OCI-LY7 (cell line): ENCODE measurements at regions of chr11 and their contacts with region 1.

Region 1: GRCh38 chr11:57530596-57531507 is at the start of gene TIMM10:
- DNase-seq: peak; percentile 99
- H3K4me3 ChIP-seq: peak within 1 kb of the TSS; percentile 97
- H3K27ac ChIP-seq: peak within 1 kb of the TSS; percentile 74
- H3K4me1 ChIP-seq: peaks cover 31% of the 10 kb centered on the region
- CTCF ChIP-seq: peak; percentile 32
- total RNA-seq, gene TIMM10: 163 and 195 TPM in 2 replicates

Region 2: DNA sequence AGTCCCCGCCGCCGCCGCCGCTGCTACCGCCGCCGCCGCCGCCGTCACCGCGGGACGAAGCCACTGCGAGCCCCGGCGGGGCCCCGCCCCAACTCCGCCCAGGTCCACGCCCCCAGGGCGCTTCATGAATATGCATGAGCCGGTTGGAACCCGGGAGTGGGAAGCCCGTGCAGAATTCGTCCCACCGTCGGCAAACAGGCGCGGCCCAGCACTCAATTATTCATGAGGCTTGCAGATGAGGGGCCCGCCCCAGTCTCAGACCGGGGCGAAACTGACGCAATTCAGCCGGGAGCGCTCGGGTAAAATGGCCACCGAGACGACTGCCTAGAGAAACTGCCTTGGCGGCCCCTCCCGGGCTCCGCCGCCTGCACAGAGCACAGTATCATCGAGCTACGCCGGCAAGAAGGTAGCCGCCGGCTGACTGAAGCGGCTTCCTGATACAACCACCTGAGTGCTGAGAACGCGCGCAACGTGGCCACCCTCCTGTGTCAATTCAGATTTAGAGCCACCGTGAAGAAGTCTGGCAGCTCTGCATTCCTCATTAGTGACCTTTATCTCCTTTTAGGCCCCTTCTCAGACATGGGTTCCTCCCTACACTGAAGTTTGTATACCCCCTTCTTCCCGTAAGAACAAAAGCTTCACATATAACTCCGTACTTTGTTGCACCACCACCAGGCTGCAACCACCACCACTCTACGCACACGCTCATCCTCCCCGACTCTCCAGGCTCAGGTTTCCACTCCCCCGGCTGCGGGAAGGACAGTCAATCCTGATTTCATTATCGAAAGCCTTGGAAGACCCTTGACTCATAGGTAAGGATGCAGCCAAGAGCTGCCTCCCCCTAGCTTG is 205.7 kb before region 1 on chr11 and contains the start of gene TNKS1BP1:
- CTCF ChIA-PET with region 1: no interaction called
- POLR2A ChIA-PET with region 1: no interaction called
- intact Hi-C with region 1: loop called (anchors 1 kb)
- DNase-seq: peak; percentile 96
- H3K4me3 ChIP-seq: peak within 1 kb of the TSS; percentile 70
- H3K27ac ChIP-seq: peak within 1 kb of the TSS; percentile 86
- H3K4me1 ChIP-seq: peaks cover 28% of the 10 kb centered on the region
- CTCF ChIP-seq: no peak
- total RNA-seq, gene TNKS1BP1: 5.3 and 6.4 TPM in 2 replicates

Region 3: GRCh38 chr11:57446055-57446454 is 84.8 kb before region 1 on chr11:
- CTCF ChIA-PET with region 1: no interaction called
- POLR2A ChIA-PET with region 1: no interaction called
- intact Hi-C with region 1: no loop called
- DNase-seq: no peak
- H3K4me3 ChIP-seq: no peak overlapping the region
- H3K27ac ChIP-seq: no peak overlapping the region
- H3K4me1 ChIP-seq: no peaks in the 10 kb centered on the region
- CTCF ChIP-seq: no peak

Region 4: DNA sequence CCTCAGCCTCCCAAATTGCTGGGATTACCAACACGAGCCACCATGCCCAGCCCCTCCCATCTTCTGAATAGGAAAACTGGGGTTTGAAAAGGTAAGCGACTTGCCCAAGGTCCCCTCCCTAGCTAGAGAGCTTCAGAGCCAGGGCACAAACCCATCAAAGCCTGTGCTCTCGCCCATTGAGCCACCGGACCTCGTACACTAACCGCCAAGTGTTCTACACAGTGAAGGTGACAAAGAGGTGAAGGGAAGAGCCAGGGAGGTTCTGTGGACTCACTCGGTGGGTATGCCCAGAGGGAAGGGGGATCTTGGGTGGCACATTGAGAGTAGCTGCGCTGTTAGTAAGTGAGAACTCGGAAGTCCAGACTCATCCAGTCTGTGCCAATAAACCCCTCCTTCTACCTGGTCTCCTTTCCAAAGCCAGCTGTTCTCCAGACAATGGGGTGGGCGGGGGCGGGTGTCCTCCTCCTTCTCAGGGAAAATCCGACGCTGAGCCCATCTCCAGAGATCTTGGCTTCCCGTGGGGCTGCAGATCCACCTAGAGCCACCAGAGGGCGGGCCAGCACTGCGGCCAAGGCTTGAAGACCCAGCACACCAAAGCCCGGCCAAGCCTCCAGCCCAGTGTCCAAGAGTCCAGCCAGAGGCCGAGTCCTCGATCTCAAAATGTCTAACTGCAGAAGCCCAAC is 73.8 kb before region 1 on chr11:
- CTCF ChIA-PET with region 1: interaction called, 20 read pairs
- POLR2A ChIA-PET with region 1: interaction called, 4 read pairs
- intact Hi-C with region 1: loop called (anchors 1 kb)
- DNase-seq: peak; percentile 74
- H3K4me3 ChIP-seq: no peak overlapping the region
- H3K27ac ChIP-seq: no peak overlapping the region
- H3K4me1 ChIP-seq: peaks cover 27% of the 10 kb centered on the region
- CTCF ChIP-seq: peak; percentile 92

Region 5: DNA sequence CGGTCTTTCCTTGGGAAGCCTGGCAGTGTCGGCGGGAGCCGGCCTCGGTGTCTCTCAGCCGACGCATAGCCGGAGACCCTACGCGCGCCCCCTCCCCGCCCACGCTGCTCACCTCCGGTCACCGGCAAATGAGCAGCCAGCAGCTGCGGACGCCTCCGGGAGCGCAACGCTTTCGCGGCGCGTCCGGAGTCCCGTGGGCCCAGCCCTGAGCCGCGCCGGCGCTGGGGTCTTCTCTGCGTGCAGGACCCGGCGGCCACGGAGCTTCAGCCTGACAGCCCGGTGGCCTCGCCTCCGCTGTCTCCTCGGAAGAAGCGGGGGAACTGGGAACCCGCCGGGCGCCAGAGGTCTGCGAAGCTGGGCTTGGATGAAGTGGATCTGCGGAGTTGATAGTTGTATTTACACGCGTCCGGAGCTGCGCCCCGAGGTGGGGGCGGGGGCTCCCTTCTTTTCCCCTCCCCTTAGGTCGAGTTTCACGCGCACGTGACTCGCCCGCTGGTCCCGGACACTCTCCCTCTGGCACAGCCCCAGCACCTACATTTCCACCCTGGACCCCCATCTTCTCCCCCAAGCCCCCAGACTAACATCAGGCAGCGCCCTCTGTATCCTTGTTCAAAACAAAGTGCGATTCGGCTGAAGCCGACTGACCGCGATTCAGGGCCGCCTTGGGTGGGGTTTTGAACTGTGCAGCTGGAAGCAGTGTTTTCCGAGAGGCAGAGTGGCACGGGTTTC is 15.4 kb before region 1 on chr11 and contains the start of gene SLC43A1:
- CTCF ChIA-PET with region 1: interaction called, 21 read pairs
- POLR2A ChIA-PET with region 1: interaction called, 56 read pairs
- intact Hi-C with region 1: no loop called
- DNase-seq: peak; percentile 63
- H3K4me3 ChIP-seq: peak within 1 kb of the TSS; percentile 91
- H3K27ac ChIP-seq: peak within 1 kb of the TSS; percentile 65
- H3K4me1 ChIP-seq: peaks cover 43% of the 10 kb centered on the region
- CTCF ChIP-seq: 0 out of 2 replicates have a peak, but pooled peaks have one; percentile 31
- total RNA-seq, gene SLC43A1: 47.1 and 61.1 TPM in 2 replicates

Region 6: GRCh38 chr11:57644748-57645688 is 114.2 kb after region 1 on chr11:
- CTCF ChIA-PET with region 1: no interaction called
- POLR2A ChIA-PET with region 1: interaction called, 3 read pairs
- intact Hi-C with region 1: loop called (anchors 2 kb)
- DNase-seq: peak; percentile 86
- H3K4me3 ChIP-seq: no peak overlapping the region
- H3K27ac ChIP-seq: no peak overlapping the region
- H3K4me1 ChIP-seq: peaks cover 38% of the 10 kb centered on the region
- CTCF ChIP-seq: peak; percentile 97

Region 7: DNA sequence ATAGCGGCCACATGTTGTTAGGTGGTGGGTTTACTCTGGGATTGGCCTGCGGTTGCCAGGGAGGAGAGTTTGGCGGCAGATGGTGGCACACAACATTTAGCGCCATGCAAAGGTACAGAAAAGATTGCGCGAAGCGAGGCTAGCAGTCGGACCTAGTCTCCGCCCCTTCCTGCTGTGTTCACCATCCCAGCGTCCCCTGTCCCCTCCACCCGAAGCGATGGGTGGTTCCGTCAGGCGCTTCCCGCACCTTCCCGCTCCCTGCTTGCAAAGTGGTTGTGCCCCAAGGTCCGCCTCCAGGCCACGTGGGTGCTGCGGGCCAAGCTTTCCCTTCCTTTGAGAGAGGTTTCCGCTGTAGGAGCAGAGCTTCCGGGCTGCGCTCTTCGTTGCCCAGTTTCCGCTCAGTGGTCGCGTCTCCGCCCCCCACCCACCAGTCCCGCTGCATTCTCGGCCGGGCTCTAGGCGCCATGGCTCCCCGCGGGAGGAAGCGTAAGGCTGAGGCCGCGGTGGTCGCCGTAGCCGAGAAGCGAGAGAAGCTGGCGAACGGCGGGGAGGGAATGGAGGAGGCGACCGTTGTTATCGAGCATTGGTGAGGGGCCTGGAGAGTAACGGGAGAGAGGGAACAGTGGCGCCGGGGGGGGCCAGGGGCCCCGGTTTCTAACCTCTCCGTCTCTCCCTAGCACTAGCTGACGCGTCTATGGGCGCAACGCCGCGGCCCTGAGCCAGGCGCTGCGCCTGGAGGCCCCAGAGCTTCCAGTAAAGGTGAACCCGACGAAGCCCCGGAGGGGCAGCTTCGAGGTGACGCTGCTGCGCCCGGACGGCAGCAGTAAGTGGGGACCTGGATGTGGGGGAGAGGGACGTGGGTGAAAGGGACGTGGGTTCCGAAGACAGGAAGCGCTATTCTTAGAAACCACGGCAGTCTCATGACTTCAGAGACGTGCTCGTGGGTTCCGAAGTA is 210.6 kb after region 1 on chr11 and contains the start of gene SELENOH:
- CTCF ChIA-PET with region 1: no interaction called
- POLR2A ChIA-PET with region 1: no interaction called
- intact Hi-C with region 1: loop called (anchors 1 kb)
- DNase-seq: peak; percentile 97
- H3K4me3 ChIP-seq: peak within 1 kb of the TSS; percentile 97
- H3K27ac ChIP-seq: peak within 1 kb of the TSS; percentile 77
- H3K4me1 ChIP-seq: peaks cover 20% of the 10 kb centered on the region
- CTCF ChIP-seq: no peak
- total RNA-seq, gene SELENOH: 181 and 229 TPM in 2 replicates

Region 8: DNA sequence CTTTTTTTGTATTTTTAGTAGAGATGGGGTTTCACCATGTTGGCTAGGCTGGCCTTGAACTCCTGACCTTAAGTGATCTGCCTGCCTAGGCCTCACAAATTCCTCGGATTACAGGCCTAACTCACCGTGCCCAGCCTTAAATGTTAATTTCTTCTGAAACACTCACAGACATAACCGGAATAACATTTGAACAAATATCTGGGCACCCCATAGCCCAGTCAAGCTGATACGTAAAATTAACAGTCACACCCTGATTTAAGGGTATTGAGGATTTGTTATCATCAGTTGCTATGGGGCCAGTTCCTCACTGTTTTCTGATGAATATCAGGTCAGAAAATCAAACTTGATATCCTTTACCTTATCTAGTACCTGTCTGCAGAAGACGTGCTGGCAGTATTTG is 469.8 kb after region 1 on chr11:
- CTCF ChIA-PET with region 1: no interaction called
- POLR2A ChIA-PET with region 1: no interaction called
- intact Hi-C with region 1: no loop called
- DNase-seq: no peak
- H3K4me3 ChIP-seq: no peak overlapping the region
- H3K27ac ChIP-seq: no peak overlapping the region
- H3K4me1 ChIP-seq: no peaks in the 10 kb centered on the region
- CTCF ChIP-seq: no peak